Dendritic cell treated with granulocyte-macrophage colony-stimulating factor and Interleukin-4, amounts not matched to agents 40 ng/mL and 50 ng/mL, for 4 days (primary cell): ENCODE measurements at regions of chr1 and their contacts with region 1.

Region 1: DNA sequence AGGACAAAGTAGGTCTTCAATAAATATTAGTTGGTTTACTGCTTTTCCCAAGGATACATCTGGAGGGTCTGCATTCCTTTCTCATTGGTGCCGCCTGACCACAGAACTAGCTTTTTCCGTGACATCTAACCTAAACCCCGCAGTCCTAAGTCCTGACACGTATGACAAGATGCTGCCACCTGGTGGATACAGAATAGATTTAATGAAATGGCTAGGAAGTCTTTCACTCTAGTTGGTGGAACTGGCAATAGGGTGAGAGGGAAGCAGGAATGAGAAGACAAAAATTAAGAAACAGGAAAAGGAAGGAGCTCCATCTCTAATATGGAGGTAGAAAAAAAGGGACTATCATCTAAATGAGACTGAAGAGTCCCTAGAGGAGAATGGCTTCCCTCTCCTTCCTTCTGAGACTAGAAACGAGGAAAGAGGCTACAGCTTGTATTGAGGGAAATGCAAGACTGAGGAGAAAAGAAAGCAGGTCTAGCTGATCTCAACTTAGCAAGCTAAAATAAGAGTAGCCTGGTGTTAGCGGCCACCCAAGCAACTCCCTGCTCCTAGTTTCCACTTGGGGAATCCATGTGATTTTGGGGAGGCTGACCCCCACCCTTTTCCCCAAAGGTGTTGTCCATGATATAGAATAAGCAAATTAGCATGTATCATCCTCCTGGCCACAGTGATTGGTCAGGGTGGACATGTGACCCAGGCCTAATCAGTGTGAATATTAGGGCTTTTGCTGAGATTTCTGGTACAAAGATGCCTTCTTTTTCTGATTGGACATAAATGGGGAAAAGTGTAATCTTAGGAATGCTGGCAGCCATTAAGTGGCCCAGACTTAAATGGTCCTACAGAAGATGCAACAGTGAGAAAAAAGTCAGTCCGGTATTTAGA is 5.9 kb downstream of the RFX5 start:
- H3K4me3 Mint-ChIP-seq: no peak overlapping the region
- H3K27ac Mint-ChIP-seq: peak overlapping the region; percentile 67
- H3K4me1 Mint-ChIP-seq: peaks cover 57% of the 10 kb centered on the region
- H3K27me3 Mint-ChIP-seq: no peaks in the 10 kb centered on the region

Region 2: GRCh38 chr1:151294742-151295462 is 46.2 kb before region 1 on chr1:
- intact Hi-C with region 1: loop called (anchors 2 kb)
- H3K4me3 Mint-ChIP-seq: no peak overlapping the region
- H3K27ac Mint-ChIP-seq: no peak overlapping the region
- H3K4me1 Mint-ChIP-seq: peaks cover 9% of the 10 kb centered on the region
- H3K27me3 Mint-ChIP-seq: no peaks in the 10 kb centered on the region

Region 3: DNA sequence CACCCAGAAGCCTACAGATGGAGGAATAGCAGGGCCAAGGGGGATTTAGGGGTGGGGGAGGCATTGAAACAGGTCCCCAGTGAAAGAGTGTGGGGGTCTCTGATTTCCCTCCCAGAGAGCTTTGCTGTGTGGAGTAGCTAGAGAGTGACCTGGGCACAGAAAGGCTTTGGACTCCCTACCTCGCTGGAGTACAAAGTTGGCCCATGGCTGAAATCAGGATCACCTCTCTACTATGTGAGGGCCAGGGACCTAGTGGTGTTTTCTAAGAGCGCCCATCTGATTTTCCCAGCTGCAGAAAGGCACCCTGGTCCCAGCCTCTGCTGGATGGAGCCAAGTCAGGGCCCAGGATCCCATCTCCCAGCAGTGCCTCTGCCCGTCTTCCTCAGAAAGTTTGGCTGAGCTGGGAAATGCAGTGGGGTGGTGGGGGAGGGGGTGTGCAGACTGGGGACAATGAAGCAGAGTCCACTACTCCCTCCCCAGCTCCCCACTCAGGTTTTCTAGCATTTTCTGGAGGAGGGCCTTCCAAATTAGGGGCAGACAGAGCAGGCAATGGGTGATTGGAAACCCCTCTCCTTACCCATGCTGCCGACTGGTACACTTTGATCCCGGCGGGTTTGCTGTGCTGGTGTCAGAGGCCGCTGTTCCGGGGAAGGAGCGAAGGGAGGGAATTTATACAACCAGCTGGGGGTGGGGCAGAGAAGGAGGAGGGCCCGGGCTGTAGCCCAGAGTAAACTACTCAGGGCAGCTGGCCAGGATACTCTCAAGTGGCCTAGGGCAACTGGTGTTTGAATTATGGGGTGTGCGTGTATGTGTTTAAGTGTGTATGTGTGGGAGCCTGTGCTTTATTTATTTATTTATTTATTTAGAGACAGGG is 31.2 kb after region 1 on chr1 and contains the start of gene SELENBP1:
- intact Hi-C with region 1: no loop called
- H3K4me3 Mint-ChIP-seq: peak within 1 kb of the TSS; percentile 39
- H3K27ac Mint-ChIP-seq: peak within 1 kb of the TSS; percentile 75
- H3K4me1 Mint-ChIP-seq: peaks cover 58% of the 10 kb centered on the region
- H3K27me3 Mint-ChIP-seq: no peaks in the 10 kb centered on the region

Region 4: DNA sequence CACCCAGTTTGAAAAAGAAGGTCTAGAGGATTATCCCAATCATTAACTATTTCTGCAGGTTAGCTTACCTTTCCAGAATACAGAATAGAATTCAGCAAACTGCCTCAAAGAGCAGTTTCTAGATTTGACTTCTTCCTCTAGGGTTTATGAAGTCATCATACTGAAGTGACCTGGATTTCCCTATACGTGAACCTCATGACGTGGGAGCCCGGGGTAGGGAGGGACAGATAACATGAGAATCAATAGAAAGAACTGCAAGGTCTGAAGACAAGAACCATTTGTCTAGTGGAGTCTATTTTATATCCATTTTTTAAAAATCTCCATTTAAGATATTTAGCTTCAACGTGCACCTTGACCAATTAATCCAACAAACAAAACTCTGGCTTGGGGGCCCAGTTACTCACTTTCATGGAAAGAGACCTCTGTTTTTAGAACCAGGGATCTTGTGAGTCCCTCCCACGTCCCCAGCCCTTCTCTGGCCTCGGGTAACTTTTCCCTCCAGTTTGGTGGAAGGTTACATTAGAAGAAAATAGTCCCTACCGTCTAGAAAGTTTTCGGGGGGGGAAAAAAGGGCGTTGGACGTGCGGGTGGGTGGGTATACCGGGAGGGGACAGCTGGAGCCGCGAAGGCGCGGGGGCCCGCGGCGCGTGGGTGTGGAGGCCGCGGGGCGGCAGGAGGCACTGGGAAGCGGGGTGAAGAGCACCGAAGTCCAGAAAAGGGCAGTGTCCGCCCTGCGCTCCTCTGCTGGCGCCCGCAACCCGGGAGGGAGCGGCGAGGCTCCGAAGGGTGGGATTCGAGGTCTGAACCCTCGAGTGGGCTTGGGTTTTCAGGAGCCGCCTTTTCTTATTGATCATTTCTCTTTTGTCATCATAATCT is 132.0 kb after region 1 on chr1:
- intact Hi-C with region 1: no loop called
- H3K4me3 Mint-ChIP-seq: peak overlapping the region; percentile 81
- H3K27ac Mint-ChIP-seq: peak overlapping the region; percentile 92
- H3K4me1 Mint-ChIP-seq: peaks cover 8% of the 10 kb centered on the region
- H3K27me3 Mint-ChIP-seq: no peaks in the 10 kb centered on the region